ENCODE measurements at regions of chr16 and their contacts with region 1.

Region 1: GRCh38 chr16:9258423-9259051 is 167.1 kb downstream of the HAPSTR1 start:
- H3K4me3 ChIP-seq: no peak overlapping the region
- H3K27ac ChIP-seq: no peak overlapping the region
- H3K4me1 ChIP-seq: peaks cover 6% of the 10 kb centered on the region
- CTCF ChIP-seq: no peak

Region 2: GRCh38 chr16:9248162-9248561 is 10.4 kb before region 1 on chr16:
- CTCF ChIA-PET with region 1: interaction called, 35 read pairs
- POLR2A ChIA-PET with region 1: no interaction called
- H3K4me3 ChIP-seq: no peak overlapping the region
- H3K27ac ChIP-seq: no peak overlapping the region
- H3K4me1 ChIP-seq: no peaks in the 10 kb centered on the region
- CTCF ChIP-seq: no peak